B cell (primary cell): ENCODE measurements at regions of chr6 and their contacts with region 1.

Region 1: GRCh38 chr6:3118353-3119039 is at the start of gene BPHL:
- DNase-seq: peak; percentile 99
- ATAC-seq: peak; percentile 93
- H3K4me3 ChIP-seq: peak within 1 kb of the TSS; percentile 66 to 98 (median 78)
- H3K4me3 Mint-ChIP-seq: peak within 1 kb of the TSS; percentile 97
- H3K27ac ChIP-seq: peak within 1 kb of the TSS; percentile 93 to 95
- H3K27ac Mint-ChIP-seq: peak within 1 kb of the TSS; percentile 98
- H3K4me1 ChIP-seq: peaks cover 12% of the 10 kb centered on the region in 2 donors
- H3K4me1 Mint-ChIP-seq: peaks cover 18% of the 10 kb centered on the region
- H3K27me3 ChIP-seq: no peaks in the 10 kb centered on the region
- H3K27me3 Mint-ChIP-seq: no peaks in the 10 kb centered on the region
- CTCF ChIP-seq: no peak
- total RNA-seq, gene BPHL: 14.3 and 16.3 TPM in 2 replicates

Region 2: GRCh38 chr6:2999618-3000557 is 118.6 kb before region 1 on chr6 and contains the start of gene NQO2:
- CTCF ChIA-PET with region 1: no interaction called
- POLR2A ChIA-PET with region 1: no interaction called
- intact Hi-C with region 1: loop called (anchors 1 kb)
- DNase-seq: peak; percentile 92
- ATAC-seq: peak; percentile 88
- H3K4me3 ChIP-seq: peak within 1 kb of the TSS; percentile 65 to 91 (median 85)
- H3K4me3 Mint-ChIP-seq: peak within 1 kb of the TSS; percentile 96
- H3K27ac ChIP-seq: peak within 1 kb of the TSS; percentile 65 to 71
- H3K27ac Mint-ChIP-seq: peak within 1 kb of the TSS; percentile 89
- H3K4me1 ChIP-seq: peaks cover 11 to 21% of the 10 kb centered on the region in 2 donors
- H3K4me1 Mint-ChIP-seq: peaks cover 20% of the 10 kb centered on the region
- H3K27me3 ChIP-seq: no peaks in the 10 kb centered on the region
- H3K27me3 Mint-ChIP-seq: no peaks in the 10 kb centered on the region
- CTCF ChIP-seq: no peak
- total RNA-seq, gene NQO2: 17.9 and 21.5 TPM in 2 replicates

Region 3: GRCh38 chr6:3068329-3069214 is 49.9 kb before region 1 on chr6 and contains the start of gene RIPK1:
- CTCF ChIA-PET with region 1: interaction called, 4 read pairs
- POLR2A ChIA-PET with region 1: interaction called, 7 read pairs
- intact Hi-C with region 1: loop called (anchors 1 kb)
- DNase-seq: peak; percentile 95
- ATAC-seq: peak; percentile 73
- H3K4me3 ChIP-seq: peak within 1 kb of the TSS; percentile 55 to 87 (median 85)
- H3K4me3 Mint-ChIP-seq: peak within 1 kb of the TSS; percentile 98
- H3K27ac ChIP-seq: peak within 1 kb of the TSS; percentile 92 to 99
- H3K27ac Mint-ChIP-seq: peak within 1 kb of the TSS; percentile 99
- H3K4me1 ChIP-seq: peaks cover 17 to 23% of the 10 kb centered on the region in 2 donors
- H3K4me1 Mint-ChIP-seq: peaks cover 43% of the 10 kb centered on the region
- H3K27me3 ChIP-seq: no peaks in the 10 kb centered on the region
- H3K27me3 Mint-ChIP-seq: no peaks in the 10 kb centered on the region
- CTCF ChIP-seq: no peak
- total RNA-seq, gene RIPK1: 26.2 and 28.1 TPM in 2 replicates

Region 4: DNA sequence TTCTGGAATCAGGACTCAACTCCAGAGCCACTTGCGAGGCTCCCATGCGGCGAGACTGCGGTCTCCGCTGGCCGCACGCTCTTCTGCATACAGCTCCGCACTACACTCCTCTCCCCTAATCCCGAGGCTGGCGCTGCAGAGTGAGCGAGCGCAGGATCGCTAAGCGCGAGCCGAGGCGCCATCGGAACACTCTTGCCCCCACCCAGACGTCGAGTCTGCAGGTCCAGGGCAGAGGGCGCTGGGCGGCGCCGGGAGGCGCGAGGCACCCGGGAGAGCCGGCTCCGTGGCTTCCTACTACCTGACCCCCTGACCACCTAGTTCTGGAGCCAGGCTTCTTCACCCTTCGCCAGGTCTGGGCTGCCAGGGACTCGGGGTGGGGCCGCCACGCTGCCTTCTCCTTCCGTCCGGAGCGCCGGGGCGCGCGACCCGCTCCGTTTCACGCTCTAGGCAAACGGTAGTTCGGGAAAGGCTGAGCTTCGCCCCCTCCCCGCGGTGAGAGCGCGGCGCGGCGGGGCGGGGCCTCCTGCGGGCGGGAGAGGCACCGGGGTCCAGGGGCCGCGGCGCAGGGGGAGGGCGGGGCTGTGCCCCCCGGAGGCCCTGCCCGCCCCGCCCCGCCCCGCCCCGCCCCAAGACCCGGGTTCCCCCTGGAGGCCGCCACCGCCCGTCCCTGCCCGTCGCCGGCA is 44.2 kb after region 1 on chr6:
- CTCF ChIA-PET with region 1: no interaction called
- POLR2A ChIA-PET with region 1: no interaction called
- intact Hi-C with region 1: loop called (anchors 1 kb)
- DNase-seq: peak; percentile 81
- ATAC-seq: peak; percentile 79
- H3K4me3 ChIP-seq: peak overlapping the region in 4 of 5 experiments; percentile 71 to 81 (median 78)
- H3K4me3 Mint-ChIP-seq: peak overlapping the region; percentile 83
- H3K27ac ChIP-seq: peak overlapping the region in 1 of 2 donors; percentile 51
- H3K27ac Mint-ChIP-seq: peak overlapping the region; percentile 71
- H3K4me1 ChIP-seq: peaks cover 10 to 18% of the 10 kb centered on the region in 2 donors
- H3K4me1 Mint-ChIP-seq: peaks cover 23% of the 10 kb centered on the region
- H3K27me3 ChIP-seq: peaks cover 0 to 10% (median 0%) of the 10 kb centered on the region in 4 experiments
- H3K27me3 Mint-ChIP-seq: peaks cover 4% of the 10 kb centered on the region
- CTCF ChIP-seq: no peak

Region 5: DNA sequence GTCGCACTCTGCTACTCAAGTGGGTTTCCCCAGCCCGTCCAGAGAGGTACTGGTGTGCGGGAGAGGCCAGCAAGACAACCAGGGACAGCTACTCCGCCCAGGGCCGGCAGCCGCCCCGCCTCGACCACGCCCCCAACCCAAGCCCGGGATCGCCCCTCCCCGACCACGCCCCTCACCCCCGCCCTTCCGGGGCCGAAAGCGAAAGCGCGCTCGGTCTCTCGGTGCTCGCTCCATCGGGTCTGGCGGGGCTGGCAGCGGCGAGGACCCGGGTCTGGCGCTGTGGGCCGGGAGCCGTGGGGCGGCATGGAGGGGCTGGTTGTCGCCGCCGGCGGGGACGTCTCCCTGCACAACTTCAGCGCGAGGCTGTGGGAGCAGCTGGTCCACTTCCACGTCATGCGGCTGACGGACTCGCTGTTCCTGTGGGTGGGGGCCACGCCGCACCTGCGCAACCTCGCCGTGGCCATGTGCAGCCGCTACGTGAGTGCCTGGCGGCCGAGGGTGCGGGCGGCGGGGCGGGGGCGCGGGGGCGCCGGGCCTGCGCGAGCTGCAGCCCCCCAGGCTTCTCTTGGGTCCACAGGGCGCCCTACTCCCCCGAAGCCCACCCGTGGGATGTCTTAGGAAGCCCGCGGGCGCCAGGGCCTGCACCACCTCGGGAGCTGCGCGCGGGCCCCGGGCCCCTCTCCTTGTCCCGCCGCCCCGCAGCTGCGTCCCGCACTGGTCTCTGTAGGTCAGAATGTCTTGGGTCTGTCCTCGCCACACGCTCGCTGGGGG is 140.4 kb after region 1 on chr6 and contains the start of gene PSMG4:
- CTCF ChIA-PET with region 1: interaction called, 5 read pairs
- POLR2A ChIA-PET with region 1: interaction called, 3 read pairs
- intact Hi-C with region 1: loop called (anchors 1 kb)
- DNase-seq: peak; percentile 92
- ATAC-seq: peak; percentile 92
- H3K4me3 ChIP-seq: peak within 1 kb of the TSS; percentile 65 to 86 (median 78)
- H3K4me3 Mint-ChIP-seq: peak within 1 kb of the TSS; percentile 97
- H3K27ac ChIP-seq: peak within 1 kb of the TSS; percentile 12 to 65
- H3K27ac Mint-ChIP-seq: peak within 1 kb of the TSS; percentile 91
- H3K4me1 ChIP-seq: peaks cover 20 to 34% of the 10 kb centered on the region in 2 donors
- H3K4me1 Mint-ChIP-seq: peaks cover 35% of the 10 kb centered on the region
- H3K27me3 ChIP-seq: no peaks in the 10 kb centered on the region
- H3K27me3 Mint-ChIP-seq: peaks cover 3% of the 10 kb centered on the region
- CTCF ChIP-seq: no peak
- total RNA-seq, gene PSMG4: 31.8 and 31.9 TPM in 2 replicates

Region 6: GRCh38 chr6:3751730-3752542 is 633.4 kb after region 1 on chr6:
- CTCF ChIA-PET with region 1: no interaction called
- POLR2A ChIA-PET with region 1: no interaction called
- intact Hi-C with region 1: loop called (anchors 5 kb)
- DNase-seq: peak; percentile 86
- ATAC-seq: peak; percentile 73
- H3K4me3 ChIP-seq: peak overlapping the region in 4 of 5 experiments; percentile 45 to 73 (median 62)
- H3K4me3 Mint-ChIP-seq: peak overlapping the region; percentile 75
- H3K27ac ChIP-seq: peak overlapping the region; percentile 36
- H3K27ac Mint-ChIP-seq: peak overlapping the region; percentile 53
- H3K4me1 ChIP-seq: peaks cover 36 to 51% of the 10 kb centered on the region in 2 donors
- H3K4me1 Mint-ChIP-seq: peaks cover 57% of the 10 kb centered on the region
- H3K27me3 ChIP-seq: peaks cover 0 to 19% (median 5%) of the 10 kb centered on the region in 4 experiments
- H3K27me3 Mint-ChIP-seq: peaks cover 7% of the 10 kb centered on the region
- CTCF ChIP-seq: peak; percentile 67